HepG2 (cell line): ENCODE measurements at regions of chr19 and their contacts with region 1.

Region 1: GRCh38 chr19:18919086-18919899 is at the starts of genes COPE and DDX49:
- DNase-seq: peak; percentile 100
- ATAC-seq: peak; percentile 95
- H3K4me3 ChIP-seq: peak within 1 kb of the TSS; percentile 79 to 100 (median 97)
- H3K27ac ChIP-seq: peak within 1 kb of the TSS; percentile 85
- H3K4me1 ChIP-seq: peaks cover 35% of the 10 kb centered on the region
- H3K27me3 ChIP-seq: no peaks in the 10 kb centered on the region; a peak in 1 of 5 replicates
- CTCF ChIP-seq: no peak; the same call in 1 of the 2 replicates
- EP300 ChIP-seq: no peak
- POLR2A ChIP-seq: peak; percentile 77 to 96
- RAD21 ChIP-seq: peak; percentile 28; the same call in 1 of the 2 replicates
- total RNA-seq, gene COPE: 188 and 189 TPM in 2 replicates
- total RNA-seq, gene DDX49: 44.6 and 46.2 TPM in 2 replicates

Region 2: DNA sequence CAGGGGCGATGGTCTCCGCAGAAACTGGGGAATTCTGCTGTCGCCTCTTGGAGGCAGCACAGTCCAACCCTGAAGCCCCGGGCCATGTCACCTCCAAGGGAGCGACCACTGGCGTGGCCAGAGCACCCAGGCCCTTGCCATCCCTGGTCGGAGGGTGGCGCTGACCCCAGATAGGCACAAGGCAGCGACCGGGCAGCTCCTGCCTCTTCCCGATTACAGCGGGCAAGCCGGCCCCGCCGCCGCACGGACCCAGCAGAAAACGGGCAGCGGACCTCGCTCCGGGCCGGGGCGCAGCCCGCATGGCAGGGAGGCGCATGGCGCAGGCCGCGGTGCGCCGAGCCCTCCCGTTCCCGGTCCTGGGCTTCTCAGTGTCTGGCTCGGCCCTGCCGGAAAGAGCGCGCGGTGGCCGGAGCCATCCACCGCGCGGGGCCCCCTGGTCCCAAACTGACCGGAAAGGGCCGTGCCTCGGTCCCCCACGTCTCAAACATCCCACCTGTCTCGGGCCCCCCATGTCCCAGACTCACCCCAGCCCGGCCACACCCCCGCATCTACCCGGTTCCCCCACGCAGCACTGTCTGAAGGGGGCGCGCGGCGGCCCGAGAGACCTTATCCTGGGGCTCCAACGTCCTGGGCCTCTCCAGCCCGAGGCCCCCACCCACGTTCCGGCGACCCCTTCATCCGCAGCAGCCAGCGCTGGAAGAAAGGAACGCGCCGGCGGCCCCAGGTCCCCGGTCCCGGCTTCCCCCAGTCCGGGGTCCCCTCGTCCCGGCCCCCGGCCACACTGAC is 24.1 kb before region 1 on chr19:
- CTCF ChIA-PET with region 1: no interaction called
- POLR2A ChIA-PET with region 1: interaction called, 11 read pairs
- in situ Hi-C with region 1: no loop called
- intact Hi-C with region 1: no loop called
- DNase-seq: peak; percentile 79
- ATAC-seq: peak; percentile 91
- H3K4me3 ChIP-seq: peak overlapping the region; percentile 46 to 75 (median 70); a peak in 5 of 6 replicates
- H3K27ac ChIP-seq: no peak overlapping the region
- H3K4me1 ChIP-seq: peaks cover 23% of the 10 kb centered on the region
- H3K27me3 ChIP-seq: no peaks in the 10 kb centered on the region; a peak in 1 of 5 replicates
- CTCF ChIP-seq: peak; percentile 96
- EP300 ChIP-seq: no peak
- POLR2A ChIP-seq: peak; percentile 31 to 34; a peak in 2 of 4 replicates
- RAD21 ChIP-seq: peak; percentile 89

Region 3: GRCh38 chr19:18929313-18929712 is 10.0 kb after region 1 on chr19:
- CTCF ChIA-PET with region 1: no interaction called
- POLR2A ChIA-PET with region 1: interaction called, 11 read pairs
- in situ Hi-C with region 1: no loop called
- intact Hi-C with region 1: no loop called
- DNase-seq: no peak
- ATAC-seq: no peak
- H3K4me3 ChIP-seq: no peak overlapping the region
- H3K27ac ChIP-seq: no peak overlapping the region
- H3K4me1 ChIP-seq: no peaks in the 10 kb centered on the region
- H3K27me3 ChIP-seq: no peaks in the 10 kb centered on the region
- CTCF ChIP-seq: no peak
- EP300 ChIP-seq: no peak
- POLR2A ChIP-seq: 0 out of 4 replicates have a peak, but pooled peaks of 1 of the 2 experiments have one; percentile 24
- RAD21 ChIP-seq: no peak

Region 4: GRCh38 chr19:18940769-18941407 is 21.6 kb after region 1 on chr19 and contains the start of gene HOMER3:
- CTCF ChIA-PET with region 1: no interaction called
- POLR2A ChIA-PET with region 1: interaction called, 17 read pairs
- in situ Hi-C with region 1: no loop called
- intact Hi-C with region 1: no loop called
- DNase-seq: no peak
- ATAC-seq: peak; percentile 56
- H3K4me3 ChIP-seq: peak within 1 kb of the TSS; percentile 60 to 85 (median 74)
- H3K27ac ChIP-seq: no peak within 1 kb of the TSS
- H3K4me1 ChIP-seq: peaks cover 52% of the 10 kb centered on the region
- H3K27me3 ChIP-seq: no peaks in the 10 kb centered on the region
- CTCF ChIP-seq: peak; percentile 15; the same call in 1 of the 2 replicates
- EP300 ChIP-seq: no peak
- POLR2A ChIP-seq: no peak
- RAD21 ChIP-seq: 0 out of 2 replicates have a peak, but pooled peaks have one; percentile 10
- total RNA-seq, gene HOMER3: 16.0 and 21.3 TPM in 2 replicates

Region 5: DNA sequence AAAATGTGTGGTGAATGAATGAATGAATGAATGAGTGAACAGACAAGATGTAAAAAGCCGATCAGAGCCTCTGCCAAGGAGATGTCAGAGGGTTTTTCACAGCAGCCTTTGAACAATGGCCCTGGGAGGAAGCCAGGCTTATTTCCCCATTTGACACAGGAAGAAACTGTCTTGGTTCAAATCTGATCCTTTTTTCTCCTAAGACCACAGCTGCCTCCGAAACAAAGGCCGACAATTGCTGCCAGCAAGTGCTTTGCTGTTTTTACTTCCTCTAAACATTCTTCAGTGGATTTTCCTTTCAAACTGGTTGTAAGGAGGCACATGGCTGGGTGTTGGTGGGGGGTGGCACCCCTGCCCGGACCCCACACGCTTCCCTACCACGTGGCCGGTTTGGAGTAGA is 66.0 kb after region 1 on chr19:
- CTCF ChIA-PET with region 1: no interaction called
- POLR2A ChIA-PET with region 1: interaction called, 10 read pairs
- in situ Hi-C with region 1: loop called (anchors 10 kb)
- intact Hi-C with region 1: loop called (anchors 1 kb)
- DNase-seq: no peak
- ATAC-seq: no peak
- H3K4me3 ChIP-seq: no peak overlapping the region
- H3K27ac ChIP-seq: no peak overlapping the region
- H3K4me1 ChIP-seq: peaks cover 10% of the 10 kb centered on the region
- H3K27me3 ChIP-seq: peaks cover 0 to 34% of the 10 kb centered on the region in 2 experiments; a peak in 3 of 5 replicates
- CTCF ChIP-seq: no peak
- EP300 ChIP-seq: no peak
- POLR2A ChIP-seq: no peak
- RAD21 ChIP-seq: no peak